ENCODE measurements at regions of chr7 and their contacts with region 1.

Region 1: GRCh38 chr7:124765401-124766352 is at the start of gene GPR37:
- DNase-seq: peak; percentile 85
- ATAC-seq: peak; percentile 71
- H3K4me3 Mint-ChIP-seq: peak within 1 kb of the TSS; percentile 91
- H3K27ac Mint-ChIP-seq: peak within 1 kb of the TSS; percentile 93
- H3K4me1 Mint-ChIP-seq: peaks cover 36% of the 10 kb centered on the region
- H3K27me3 Mint-ChIP-seq: peaks cover 23% of the 10 kb centered on the region
- CTCF ChIP-seq: no peak
- total RNA-seq, gene GPR37: 10.9 to 20.4 TPM (median 11.3 TPM) in 3 replicates

Region 2: GRCh38 chr7:124784879-124785818 is 19.5 kb after region 1 on chr7:
- CTCF ChIA-PET with region 1: interaction called, 19 read pairs
- POLR2A ChIA-PET with region 1: interaction called, 3 read pairs
- DNase-seq: peak; percentile 60
- ATAC-seq: peak; percentile 91
- H3K4me3 Mint-ChIP-seq: no peak overlapping the region
- H3K27ac Mint-ChIP-seq: no peak overlapping the region
- H3K4me1 Mint-ChIP-seq: peaks cover 31% of the 10 kb centered on the region
- H3K27me3 Mint-ChIP-seq: no peaks in the 10 kb centered on the region
- CTCF ChIP-seq: peak; percentile 70